ENCODE measurements at regions of chr17 and their contacts with region 1.

Region 1: DNA sequence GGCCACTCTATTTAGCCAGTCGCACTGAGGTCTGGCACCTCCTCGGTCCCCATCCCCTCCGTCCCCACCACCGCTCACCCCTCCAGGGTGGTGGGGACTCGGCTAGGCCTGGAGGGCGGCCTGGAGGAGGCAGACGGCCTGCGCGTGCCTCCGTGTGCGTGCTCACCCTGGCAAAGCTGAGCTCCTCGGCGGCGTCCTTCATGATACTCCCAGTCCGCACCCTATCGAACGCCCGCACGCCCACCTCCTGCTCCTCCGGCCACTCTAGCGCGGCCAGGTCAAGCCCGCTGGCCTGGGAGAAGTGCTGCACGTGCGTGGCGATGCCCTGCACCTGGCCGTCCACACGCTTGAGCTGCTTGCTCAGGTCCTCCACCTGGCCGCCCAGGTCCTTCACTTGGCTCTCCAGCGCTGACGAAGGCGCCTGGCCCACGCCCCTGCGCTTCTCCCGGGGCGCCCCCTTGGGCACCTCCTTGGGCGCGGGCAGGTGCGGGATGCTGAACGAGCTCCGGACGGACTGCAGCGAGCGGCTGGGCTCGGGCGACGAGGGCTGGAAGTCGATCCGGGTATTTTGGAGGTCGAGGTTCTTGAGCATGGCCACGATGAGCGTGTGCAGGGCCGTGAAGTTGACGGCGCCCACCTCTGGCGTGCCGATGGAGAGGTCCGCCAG is 644 bp downstream of the QRICH2 start:
- DNase-seq: no peak
- ATAC-seq: peak; percentile 20 to 24
- H3K4me3 ChIP-seq: no peak overlapping the region
- H3K27ac ChIP-seq: no peak overlapping the region
- H3K4me1 ChIP-seq: no peaks in the 10 kb centered on the region
- H3K27me3 ChIP-seq: no peaks in the 10 kb centered on the region

Region 2: DNA sequence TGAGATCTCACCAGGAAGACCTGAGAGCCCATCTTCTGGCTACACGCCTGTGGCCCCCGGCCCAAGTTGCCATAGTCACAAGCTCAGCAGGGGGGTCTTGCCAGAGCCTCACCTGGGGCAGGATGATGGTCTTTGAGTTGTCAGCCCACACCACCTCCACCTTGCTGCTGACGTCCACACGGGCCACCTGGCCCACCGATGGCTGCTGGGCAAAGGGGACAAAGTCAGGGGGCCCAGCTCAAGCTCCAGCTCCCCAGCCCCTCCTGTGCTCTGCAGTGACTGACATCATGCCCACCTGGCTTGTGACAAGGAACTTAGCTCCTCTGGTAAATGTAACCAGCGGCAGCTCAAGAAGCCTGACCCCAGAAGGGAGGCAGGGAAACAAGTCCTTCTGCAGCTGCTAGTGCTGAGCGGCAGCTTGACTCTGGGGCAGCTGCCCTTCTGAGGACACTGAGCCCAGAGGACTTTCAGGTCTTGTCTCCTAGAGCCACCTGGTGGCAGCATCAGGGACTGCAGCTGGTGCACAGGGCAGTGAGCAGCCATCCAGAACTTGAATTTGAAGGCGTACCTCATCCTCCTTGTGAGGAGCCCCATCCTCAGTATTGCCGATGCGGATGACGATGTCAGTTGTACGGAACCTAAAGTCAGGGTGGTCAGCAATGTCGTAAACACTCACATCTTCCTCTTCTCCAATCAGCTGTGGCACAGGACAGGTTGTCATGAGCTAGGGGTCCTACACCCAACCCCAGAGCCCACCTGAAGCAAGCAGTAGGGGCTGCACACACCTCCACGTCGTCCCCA is 90.5 kb after region 1 on chr17:
- intact Hi-C with region 1: loop called (anchors 5 kb)
- DNase-seq: peak; percentile 89 to 97 (median 95)
- ATAC-seq: peak; percentile 76 to 77
- H3K4me3 ChIP-seq: no peak overlapping the region
- H3K27ac ChIP-seq: no peak overlapping the region
- H3K4me1 ChIP-seq: no peaks in the 10 kb centered on the region
- H3K27me3 ChIP-seq: no peaks in the 10 kb centered on the region

Region 3: GRCh38 chr17:76458580-76459490 is 151.4 kb after region 1 on chr17:
- intact Hi-C with region 1: loop called in 1 of 4 experiments (anchors 5 kb)
- DNase-seq: peak in 2 of 3 donors; percentile 74 to 80
- ATAC-seq: peak; percentile 67 to 70
- H3K4me3 ChIP-seq: no peak overlapping the region
- H3K27ac ChIP-seq: no peak overlapping the region
- H3K4me1 ChIP-seq: no peaks in the 10 kb centered on the region
- H3K27me3 ChIP-seq: no peaks in the 10 kb centered on the region

Region 4: DNA sequence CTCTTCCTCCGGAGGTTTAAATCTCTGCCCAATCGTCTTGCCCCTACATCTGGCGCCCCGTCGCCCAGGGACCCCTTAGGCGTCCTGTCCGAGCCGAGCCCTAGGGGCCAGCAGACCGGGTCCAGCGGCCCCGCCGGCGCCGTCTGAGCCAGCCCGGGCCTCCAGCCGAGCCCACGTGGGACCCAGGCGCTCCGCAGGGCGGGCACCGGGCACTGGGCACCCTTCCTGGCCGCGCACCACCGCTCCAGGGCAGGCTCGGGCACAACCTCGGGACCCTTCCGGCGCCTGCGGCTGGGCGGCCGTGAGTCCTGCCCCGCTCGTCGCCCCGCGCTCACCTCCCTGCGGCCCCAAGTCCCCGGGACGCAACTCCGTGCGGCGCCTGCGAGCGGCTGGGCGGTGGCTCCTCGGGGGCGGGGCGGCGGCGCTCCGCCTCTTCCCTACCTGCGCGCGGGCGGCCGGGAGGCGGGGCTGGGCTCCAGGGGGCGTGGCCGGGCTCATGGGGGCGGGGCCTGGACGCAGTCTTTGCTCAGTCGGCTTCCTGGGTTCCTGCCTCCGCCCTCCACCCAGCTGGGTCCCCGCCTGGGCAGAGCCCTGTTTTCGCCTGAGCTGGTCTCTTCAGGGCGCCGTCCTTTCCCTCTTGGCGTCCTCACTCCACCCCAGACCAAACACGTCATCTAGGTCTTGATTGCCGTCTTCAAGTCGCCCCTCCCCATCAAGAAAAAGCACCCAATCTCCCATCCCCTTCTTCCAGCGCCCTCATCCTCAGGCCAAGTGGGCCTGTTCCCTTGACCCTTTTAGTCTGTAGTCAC is 193.8 kb after region 1 on chr17 and contains the start of gene RHBDF2:
- intact Hi-C with region 1: loop called in 1 of 4 experiments (anchors 10 kb)
- DNase-seq: peak; percentile 90 to 97 (median 96)
- ATAC-seq: peak; percentile 88 to 90
- H3K4me3 ChIP-seq: peak within 1 kb of the TSS; percentile 82
- H3K27ac ChIP-seq: peak within 1 kb of the TSS; percentile 80
- H3K4me1 ChIP-seq: peaks cover 18% of the 10 kb centered on the region
- H3K27me3 ChIP-seq: no peaks in the 10 kb centered on the region
- total RNA-seq, gene RHBDF2: 10.2 to 16.4 (median 12.8) TPM

Measured in right cardiac atrium (tissue), 5 donors.